ENCODE measurements at regions of chr3 and their contacts with region 1.

Region 1: DNA sequence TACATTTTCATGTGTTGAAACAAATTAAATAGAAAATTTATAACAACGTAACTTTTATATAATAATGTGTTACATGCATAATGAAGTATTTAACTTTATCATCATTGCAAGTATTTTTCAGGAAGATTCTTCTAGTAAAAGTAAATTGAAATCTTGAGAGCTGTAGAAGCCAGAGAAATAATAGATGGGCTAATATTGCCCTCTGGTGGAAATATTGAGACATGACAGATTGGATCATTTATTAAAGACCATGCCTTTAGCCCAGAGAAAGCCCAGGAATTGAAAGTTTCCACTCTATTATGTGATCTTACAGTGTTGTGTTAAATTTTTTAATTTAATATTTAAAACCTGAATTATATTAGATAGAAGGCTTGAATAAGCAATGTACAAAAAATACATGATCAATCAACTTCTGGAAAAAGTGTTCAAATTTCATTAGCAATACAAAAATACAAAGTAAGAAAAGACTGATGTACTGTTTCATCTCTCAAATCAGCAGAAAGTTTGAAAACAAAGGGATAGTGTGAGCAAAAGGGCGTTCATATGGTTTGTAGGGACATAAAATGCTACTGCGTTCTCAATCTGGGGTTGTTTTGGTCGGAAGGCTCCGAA is 52.7 kb upstream of the SPTSSB start:
- DNase-seq: no peak
- H3K4me3 ChIP-seq: no peak overlapping the region
- H3K27ac ChIP-seq: no peak overlapping the region
- H3K4me1 ChIP-seq: no peaks in the 10 kb centered on the region
- H3K27me3 ChIP-seq: no peaks in the 10 kb centered on the region
- CTCF ChIP-seq: peak; percentile 68 to 86 (median 78)
- POLR2A ChIP-seq: no peak

Region 2: GRCh38 chr3:161274719-161275298 is 149.2 kb before region 1 on chr3:
- intact Hi-C with region 1: loop called (anchors 10 kb)
- DNase-seq: peak; percentile 29
- H3K4me3 ChIP-seq: no peak overlapping the region
- H3K27ac ChIP-seq: no peak overlapping the region
- H3K4me1 ChIP-seq: no peaks in the 10 kb centered on the region
- H3K27me3 ChIP-seq: no peaks in the 10 kb centered on the region
- CTCF ChIP-seq: peak in 2 of 3 experiments; percentile 49 to 67
- POLR2A ChIP-seq: no peak

Region 3: GRCh38 chr3:161500068-161500796 is 76.2 kb after region 1 on chr3:
- intact Hi-C with region 1: no loop called
- DNase-seq: no peak
- H3K4me3 ChIP-seq: no peak overlapping the region
- H3K27ac ChIP-seq: no peak overlapping the region
- H3K4me1 ChIP-seq: no peaks in the 10 kb centered on the region
- H3K27me3 ChIP-seq: no peaks in the 10 kb centered on the region
- CTCF ChIP-seq: no peak
- POLR2A ChIP-seq: no peak